Posterior cingulate gyrus (tissue), 11 donors: ENCODE measurements at regions of chr16 and their contacts with region 1.

Region 1: GRCh38 chr16:85554112-85554813 is 58.9 kb upstream of the GSE1 start:
- DNase-seq: peak in 8 of 10 donors; percentile 37 to 91 (median 59)

Region 2: DNA sequence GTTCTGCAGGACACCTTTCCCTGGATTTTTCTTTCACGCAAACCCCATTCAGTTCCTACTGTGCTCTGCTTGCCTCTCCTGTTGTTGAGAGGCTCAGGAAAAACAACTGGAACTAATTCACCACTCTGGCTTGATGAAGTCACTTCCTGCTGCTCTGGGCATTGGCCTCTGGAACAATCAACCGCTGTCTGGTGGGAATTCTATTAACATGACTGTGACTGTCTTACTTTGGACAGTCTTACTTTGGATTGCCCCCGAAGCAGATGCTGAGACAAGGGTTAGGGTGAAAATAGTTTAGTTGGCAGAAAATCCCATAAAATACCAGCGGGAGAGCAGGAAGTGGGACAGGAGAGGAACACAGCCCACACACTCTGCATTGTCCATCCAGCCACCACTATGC is 1836.4 kb before region 1 on chr16:
- intact Hi-C with region 1: no loop called
- DNase-seq: peak in 3 of 10 donors; percentile 8 to 30 (median 28)

Region 3: DNA sequence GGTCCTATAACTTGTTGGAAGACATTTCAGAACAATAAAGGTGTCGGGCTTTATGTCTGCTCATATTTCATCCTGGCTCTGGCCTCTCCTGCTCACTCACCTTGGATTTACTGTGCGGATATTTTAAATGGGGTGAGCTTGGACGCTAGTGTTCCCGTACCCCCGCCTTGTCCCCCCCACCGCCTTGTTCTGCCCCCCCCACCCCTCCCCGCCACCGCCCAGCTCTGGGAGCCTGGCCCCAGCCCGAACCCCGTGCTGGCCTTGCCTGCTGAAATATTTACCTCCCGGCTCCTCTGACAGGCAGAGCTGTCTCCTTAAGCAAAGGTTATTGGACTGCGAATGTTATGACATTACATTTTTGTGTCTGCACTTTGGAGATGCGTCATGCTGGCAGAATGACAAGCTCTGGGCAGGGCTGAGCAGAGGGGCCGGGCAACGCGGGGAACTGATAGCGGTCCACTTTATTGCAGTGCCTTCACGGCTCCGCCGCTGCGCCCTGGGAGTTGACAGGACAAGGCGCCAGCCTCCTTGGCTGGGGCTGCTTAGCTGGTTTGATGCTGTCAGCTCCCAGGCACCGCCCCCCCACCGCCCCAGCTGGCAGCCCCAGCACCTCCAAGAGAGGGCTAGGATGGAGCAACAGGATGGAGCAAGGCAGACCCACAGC is 163.6 kb before region 1 on chr16:
- intact Hi-C with region 1: no loop called
- DNase-seq: peak in 4 of 10 donors; percentile 6 to 88 (median 66)

Region 4: GRCh38 chr16:85420501-85421337 is 133.5 kb before region 1 on chr16:
- intact Hi-C with region 1: loop called (anchors 10 kb)
- DNase-seq: peak in 5 of 10 donors; percentile 22 to 89 (median 62)

Region 5: DNA sequence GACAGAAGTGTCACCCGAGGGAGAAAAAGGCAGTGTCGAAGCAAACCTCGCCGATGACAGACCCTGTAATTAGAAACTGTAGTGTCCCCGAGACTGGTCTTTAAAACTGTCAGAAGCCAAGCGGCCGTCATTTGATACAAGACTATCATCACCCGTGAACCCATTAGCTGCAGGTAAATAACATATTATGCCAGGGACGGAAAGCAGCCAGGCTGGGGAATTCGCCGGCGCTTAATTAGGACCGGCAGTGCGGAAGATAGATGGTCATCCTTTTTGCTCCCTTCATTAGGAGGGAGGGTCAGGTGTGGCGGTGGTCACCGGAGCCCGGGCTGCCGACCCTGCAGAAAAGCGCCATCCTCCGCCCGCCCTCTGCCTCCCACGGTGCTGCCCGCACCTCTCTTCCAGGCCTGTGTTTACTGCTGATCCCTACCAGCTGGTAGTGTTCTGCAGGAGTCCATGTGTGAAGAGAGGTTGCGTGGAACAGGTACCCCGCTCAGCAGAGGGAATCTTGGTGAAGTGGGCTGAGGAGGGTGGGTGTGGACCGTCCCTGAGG is 50.5 kb before region 1 on chr16:
- intact Hi-C with region 1: no loop called
- DNase-seq: no peak

Region 6: GRCh38 chr16:85626191-85626981 is 72.1 kb after region 1 on chr16:
- intact Hi-C with region 1: no loop called
- DNase-seq: no peak